ENCODE measurements at regions of chr12 and their contacts with region 1.

Region 1: DNA sequence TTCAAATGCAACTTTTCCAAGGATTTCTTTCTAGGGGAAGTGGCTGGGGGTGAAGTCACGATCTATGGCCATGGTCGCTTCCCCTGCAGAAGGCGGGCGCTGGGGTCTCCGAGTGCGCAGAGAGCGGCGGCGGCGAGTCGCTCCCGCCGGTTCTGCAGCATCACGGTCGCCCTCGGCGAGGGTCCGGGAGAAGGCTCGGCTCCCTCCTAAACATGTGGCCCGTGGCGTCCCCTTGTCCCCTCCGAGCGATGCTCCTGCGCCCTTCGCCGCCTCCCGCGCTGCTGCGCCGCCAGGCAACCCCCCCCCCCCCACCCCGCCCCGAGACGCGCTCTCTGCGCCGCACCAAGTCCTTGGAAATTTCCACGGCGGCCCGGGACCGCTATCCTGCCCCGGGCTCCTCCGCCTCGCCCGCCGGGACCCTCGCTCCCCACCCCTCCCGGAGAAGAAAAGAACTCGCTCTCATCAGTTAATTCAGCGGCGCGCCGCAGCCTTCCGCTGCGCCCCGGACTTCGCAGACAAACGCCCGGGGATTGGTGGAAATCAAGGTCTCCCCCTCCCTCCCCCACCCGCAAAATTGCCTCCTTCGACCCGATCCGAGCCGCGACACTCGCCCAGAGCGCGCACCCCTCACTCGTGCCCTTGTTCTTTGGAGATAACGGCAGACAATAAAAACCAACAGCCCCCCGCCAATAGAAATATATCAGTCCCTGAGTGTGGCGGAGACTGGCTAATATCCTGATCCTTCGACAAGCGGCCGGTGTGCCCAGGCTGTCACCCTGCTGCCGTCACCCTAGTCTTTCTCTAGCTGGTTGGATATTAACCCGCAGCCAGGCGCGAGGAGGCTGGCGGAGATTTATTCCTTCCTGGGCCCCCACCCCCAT is at the start of gene ST8SIA1:
- DNase-seq: peak; percentile 33
- H3K4me3 Mint-ChIP-seq: peak within 1 kb of the TSS; percentile 94
- H3K27ac Mint-ChIP-seq: peak within 1 kb of the TSS; percentile 79
- H3K4me1 Mint-ChIP-seq: peaks cover 23% of the 10 kb centered on the region
- H3K27me3 Mint-ChIP-seq: no peaks in the 10 kb centered on the region
- CTCF ChIP-seq: no peak
- total RNA-seq, gene ST8SIA1: 3.8 and 4.7 TPM in 2 replicates

Region 2: DNA sequence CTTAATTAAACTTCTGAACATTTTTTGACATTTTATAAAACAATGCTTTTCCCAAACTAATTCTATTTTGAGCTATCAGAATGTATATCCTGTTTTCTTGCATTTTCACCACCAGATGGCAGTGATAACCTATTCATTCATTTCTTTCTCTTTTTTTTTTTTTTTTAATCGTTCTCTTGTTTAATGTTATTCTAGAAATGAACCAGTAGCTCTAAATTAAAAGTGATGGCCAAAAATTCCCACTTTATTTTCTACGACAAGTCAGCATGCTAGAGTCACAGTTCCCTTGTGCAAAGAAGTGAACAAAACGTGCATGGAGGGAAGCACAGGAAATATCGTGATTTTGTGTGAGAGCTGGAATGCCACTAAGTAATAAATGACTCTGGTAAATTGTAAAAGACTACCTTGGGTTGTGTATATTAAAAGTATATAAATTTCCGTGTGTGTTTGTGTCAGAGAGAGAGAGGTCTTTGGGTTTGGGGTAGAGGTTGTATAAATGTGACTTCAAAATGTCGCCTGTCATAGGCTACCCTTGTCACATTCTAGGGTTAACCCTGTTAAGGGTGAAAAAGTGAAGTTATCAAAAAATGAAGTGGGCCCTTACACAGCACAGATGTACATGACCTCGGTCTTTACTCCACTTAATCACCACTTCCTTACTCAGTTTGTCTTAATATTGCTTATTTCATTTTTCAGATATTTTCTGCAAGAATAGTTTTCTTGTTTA is 636.6 kb before region 1 on chr12:
- CTCF ChIA-PET with region 1: no interaction called
- POLR2A ChIA-PET with region 1: no interaction called
- intact Hi-C with region 1: loop called (anchors 10 kb)
- DNase-seq: peak; percentile 52
- H3K4me3 Mint-ChIP-seq: peak overlapping the region; percentile 47
- H3K27ac Mint-ChIP-seq: no peak overlapping the region
- H3K4me1 Mint-ChIP-seq: peaks cover 5% of the 10 kb centered on the region
- H3K27me3 Mint-ChIP-seq: no peaks in the 10 kb centered on the region
- CTCF ChIP-seq: peak; percentile 41

Region 3: GRCh38 chr12:22088886-22089285 is 245.8 kb before region 1 on chr12:
- CTCF ChIA-PET with region 1: interaction called, 39 read pairs
- POLR2A ChIA-PET with region 1: interaction called, 6 read pairs
- intact Hi-C with region 1: no loop called
- DNase-seq: peak; percentile 65
- H3K4me3 Mint-ChIP-seq: no peak overlapping the region
- H3K27ac Mint-ChIP-seq: no peak overlapping the region
- H3K4me1 Mint-ChIP-seq: peaks cover 7% of the 10 kb centered on the region
- H3K27me3 Mint-ChIP-seq: no peaks in the 10 kb centered on the region
- CTCF ChIP-seq: no peak

Region 4: GRCh38 chr12:22121227-22121626 is 213.4 kb before region 1 on chr12:
- CTCF ChIA-PET with region 1: interaction called, 10 read pairs
- POLR2A ChIA-PET with region 1: no interaction called
- intact Hi-C with region 1: no loop called
- DNase-seq: peak; percentile 51
- H3K4me3 Mint-ChIP-seq: no peak overlapping the region
- H3K27ac Mint-ChIP-seq: no peak overlapping the region
- H3K4me1 Mint-ChIP-seq: no peaks in the 10 kb centered on the region
- H3K27me3 Mint-ChIP-seq: no peaks in the 10 kb centered on the region
- CTCF ChIP-seq: no peak

Region 5: DNA sequence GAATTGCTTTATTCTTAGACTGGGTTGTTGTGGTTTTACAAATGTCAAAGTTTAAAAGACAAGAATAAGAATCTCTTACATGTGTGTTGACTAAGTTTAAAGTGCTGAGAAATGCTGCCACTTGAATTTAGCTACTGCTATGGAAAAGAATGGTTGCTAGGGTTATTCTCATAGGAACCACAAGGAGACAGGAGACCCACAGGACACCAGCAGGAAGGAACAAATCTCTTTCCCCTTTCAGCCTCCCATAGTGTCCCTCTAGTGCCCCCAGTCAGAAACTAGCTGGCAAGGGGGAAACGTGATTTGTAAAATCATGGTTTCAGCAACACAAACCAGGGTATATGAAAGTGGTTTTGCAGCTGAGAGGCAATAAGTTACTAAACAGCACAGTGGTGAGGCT is 102.8 kb before region 1 on chr12:
- CTCF ChIA-PET with region 1: interaction called, 8 read pairs
- POLR2A ChIA-PET with region 1: interaction called, 3 read pairs
- intact Hi-C with region 1: loop called (anchors 1 kb)
- DNase-seq: peak; percentile 18
- H3K4me3 Mint-ChIP-seq: no peak overlapping the region
- H3K27ac Mint-ChIP-seq: no peak overlapping the region
- H3K4me1 Mint-ChIP-seq: peaks cover 36% of the 10 kb centered on the region
- H3K27me3 Mint-ChIP-seq: peaks cover 3% of the 10 kb centered on the region
- CTCF ChIP-seq: no peak

Region 6: GRCh38 chr12:22283006-22283506 is 51.6 kb before region 1 on chr12:
- CTCF ChIA-PET with region 1: interaction called, 16 read pairs
- POLR2A ChIA-PET with region 1: interaction called, 6 read pairs
- intact Hi-C with region 1: no loop called
- DNase-seq: peak; percentile 76
- H3K4me3 Mint-ChIP-seq: no peak overlapping the region
- H3K27ac Mint-ChIP-seq: peak overlapping the region; percentile 88
- H3K4me1 Mint-ChIP-seq: peaks cover 37% of the 10 kb centered on the region
- H3K27me3 Mint-ChIP-seq: no peaks in the 10 kb centered on the region
- CTCF ChIP-seq: no peak

Region 7: GRCh38 chr12:22443379-22444316 is 109.0 kb after region 1 on chr12:
- CTCF ChIA-PET with region 1: interaction called, 10 read pairs
- POLR2A ChIA-PET with region 1: interaction called, 4 read pairs
- intact Hi-C with region 1: loop called (anchors 1 kb)
- DNase-seq: peak; percentile 87
- H3K4me3 Mint-ChIP-seq: no peak overlapping the region
- H3K27ac Mint-ChIP-seq: no peak overlapping the region
- H3K4me1 Mint-ChIP-seq: no peaks in the 10 kb centered on the region
- H3K27me3 Mint-ChIP-seq: peaks cover 20% of the 10 kb centered on the region
- CTCF ChIP-seq: peak; percentile 73

Measured in MCF 10A (cell line).